ENCODE measurements at regions of chr1 and their contacts with region 1.

Region 1: GRCh38 chr1:153922972-153923925 is at the start of gene GATAD2B:
- DNase-seq: peak; percentile 98
- H3K4me3 ChIP-seq: peak within 1 kb of the TSS; percentile 76
- H3K27me3 ChIP-seq: no peaks in the 10 kb centered on the region
- CTCF ChIP-seq: no peak
- polyA plus RNA-seq, gene GATAD2B: 3.6 and 4.4 TPM in 2 replicates

Region 2: DNA sequence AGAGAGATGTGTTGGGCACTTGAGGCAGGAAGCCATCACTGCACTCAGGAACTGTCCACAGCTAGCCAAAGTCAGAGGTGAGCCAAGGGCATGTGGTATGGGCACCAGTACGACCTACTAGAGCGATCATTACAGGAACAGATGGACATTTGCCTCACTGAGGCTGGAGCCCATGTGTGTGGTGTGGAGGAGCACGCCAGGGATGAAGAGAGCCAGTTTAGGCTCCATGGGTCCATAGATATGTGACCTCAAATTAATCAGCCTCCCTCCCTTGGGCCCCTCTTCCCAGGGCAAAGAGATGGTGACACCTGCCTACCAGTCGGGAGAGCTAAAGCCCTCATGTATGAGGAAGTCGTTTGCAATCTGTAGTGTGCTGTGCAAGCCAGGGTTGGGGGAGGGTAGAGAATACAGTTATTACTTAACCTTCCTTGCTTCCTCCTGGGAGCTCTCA is 578.7 kb before region 1 on chr1:
- CTCF ChIA-PET with region 1: no interaction called
- POLR2A ChIA-PET with region 1: no interaction called
- DNase-seq: no peak
- H3K4me3 ChIP-seq: no peak overlapping the region
- H3K27me3 ChIP-seq: peaks cover 3% of the 10 kb centered on the region; the same call in 1 of the 2 replicates
- CTCF ChIP-seq: no peak

Region 3: DNA sequence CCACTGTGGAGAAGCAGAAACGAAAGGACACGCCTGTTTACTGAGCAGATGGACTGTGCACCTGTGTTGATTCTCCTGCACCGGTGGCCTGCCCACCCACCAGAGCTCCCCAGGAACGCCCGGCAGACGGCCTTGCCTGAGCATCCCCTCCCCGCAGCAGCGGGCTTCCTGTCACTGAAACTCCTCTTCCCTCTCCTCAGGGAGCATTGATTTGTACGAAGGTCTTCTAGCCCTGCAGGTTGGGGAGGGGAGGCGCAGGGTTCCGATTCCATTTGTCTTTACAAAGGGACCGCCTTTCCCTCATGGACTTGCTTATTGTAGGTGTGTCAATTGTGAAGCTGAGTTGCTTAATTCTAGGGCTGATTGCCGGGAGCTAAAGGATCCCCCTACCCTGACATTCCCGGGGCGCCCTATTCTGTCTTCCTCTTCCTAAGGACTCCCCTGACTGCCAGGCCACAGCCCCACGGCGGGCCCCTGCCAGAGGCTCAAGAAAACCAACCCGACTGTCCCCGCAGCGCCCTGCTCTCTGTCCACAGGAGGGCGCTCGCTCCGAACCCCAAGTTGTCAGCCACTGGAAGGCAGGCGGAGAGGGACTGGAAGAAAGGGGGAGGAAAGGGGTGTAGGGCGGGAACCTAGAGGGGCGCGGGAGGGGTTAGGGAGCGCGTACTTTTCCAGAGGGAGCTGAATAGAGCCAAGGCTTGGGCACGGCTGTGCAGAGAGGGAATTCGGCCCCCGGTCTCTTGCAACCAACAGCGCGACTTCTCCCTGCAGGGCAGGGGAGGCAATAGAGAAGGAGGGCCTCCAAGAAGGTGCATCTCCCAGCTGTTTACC is 390.3 kb before region 1 on chr1:
- CTCF ChIA-PET with region 1: no interaction called
- POLR2A ChIA-PET with region 1: no interaction called
- DNase-seq: peak; percentile 36
- H3K4me3 ChIP-seq: peak overlapping the region; percentile 63
- H3K27me3 ChIP-seq: no peaks in the 10 kb centered on the region
- CTCF ChIP-seq: peak; percentile 97

Region 4: GRCh38 chr1:153912349-153912748 is 10.9 kb before region 1 on chr1:
- CTCF ChIA-PET with region 1: interaction called, 15 read pairs
- POLR2A ChIA-PET with region 1: no interaction called
- DNase-seq: no peak
- H3K4me3 ChIP-seq: no peak overlapping the region
- H3K27me3 ChIP-seq: no peaks in the 10 kb centered on the region
- CTCF ChIP-seq: no peak